ENCODE measurements at regions of chr17 and their contacts with region 1.

Region 1: DNA sequence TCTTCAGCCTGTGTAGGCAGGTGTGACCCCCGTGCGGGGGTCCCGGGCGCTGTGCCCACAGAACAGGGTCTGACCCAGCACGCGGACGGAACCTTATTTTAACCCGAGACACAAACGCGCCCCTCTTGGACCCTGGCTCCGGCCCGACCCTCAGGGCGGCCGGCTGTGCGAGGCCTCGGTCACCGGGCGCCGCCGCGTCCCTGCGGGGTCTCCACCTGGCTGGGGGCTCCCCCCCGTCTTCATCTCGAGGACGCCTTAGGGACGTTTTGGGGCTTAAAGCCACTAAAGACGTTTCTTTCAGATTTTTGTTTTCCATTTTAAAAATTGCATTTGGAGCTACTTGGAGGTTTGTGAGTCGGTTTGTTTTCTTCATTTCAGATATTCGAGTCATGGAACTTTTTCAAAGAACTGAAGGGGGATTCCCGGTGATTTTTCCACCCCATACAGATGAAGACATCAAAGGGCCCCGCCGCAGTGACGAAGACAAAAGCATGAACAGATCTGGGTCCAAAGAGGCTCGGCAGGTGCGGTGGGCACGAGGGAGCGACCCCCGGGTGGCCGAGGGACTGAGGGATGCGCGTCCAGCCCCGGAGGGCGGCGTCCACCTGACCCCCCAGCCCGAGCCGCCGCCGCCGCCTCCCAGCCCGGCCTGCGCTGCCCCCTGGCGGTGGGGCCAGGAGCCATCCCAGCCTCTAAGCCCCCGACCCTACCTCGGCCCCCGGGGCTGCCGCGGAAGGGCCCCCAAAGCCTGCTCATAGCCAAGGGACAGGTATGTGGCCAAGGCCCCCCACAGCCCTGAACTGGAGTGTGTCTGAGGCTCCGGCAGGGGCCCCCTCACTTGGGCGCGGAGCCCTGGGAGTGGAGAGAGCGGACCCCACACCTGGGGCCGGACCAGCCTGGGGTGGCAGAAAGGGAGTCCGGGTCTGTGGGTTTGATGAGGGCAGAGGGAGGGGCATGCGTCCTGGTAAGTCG is 3.8 kb upstream of the CD7 start:
- DNase-seq: peak; percentile 71
- H3K4me3 Mint-ChIP-seq: peak overlapping the region; percentile 94
- H3K27ac Mint-ChIP-seq: peak overlapping the region; percentile 99
- H3K4me1 Mint-ChIP-seq: peaks cover 18% of the 10 kb centered on the region
- H3K27me3 Mint-ChIP-seq: no peaks in the 10 kb centered on the region

Region 2: GRCh38 chr17:82092094-82092994 is 228.9 kb before region 1 on chr17:
- intact Hi-C with region 1: no loop called
- DNase-seq: no peak
- H3K4me3 Mint-ChIP-seq: no peak overlapping the region
- H3K27ac Mint-ChIP-seq: no peak overlapping the region
- H3K4me1 Mint-ChIP-seq: no peaks in the 10 kb centered on the region
- H3K27me3 Mint-ChIP-seq: no peaks in the 10 kb centered on the region

Region 3: DNA sequence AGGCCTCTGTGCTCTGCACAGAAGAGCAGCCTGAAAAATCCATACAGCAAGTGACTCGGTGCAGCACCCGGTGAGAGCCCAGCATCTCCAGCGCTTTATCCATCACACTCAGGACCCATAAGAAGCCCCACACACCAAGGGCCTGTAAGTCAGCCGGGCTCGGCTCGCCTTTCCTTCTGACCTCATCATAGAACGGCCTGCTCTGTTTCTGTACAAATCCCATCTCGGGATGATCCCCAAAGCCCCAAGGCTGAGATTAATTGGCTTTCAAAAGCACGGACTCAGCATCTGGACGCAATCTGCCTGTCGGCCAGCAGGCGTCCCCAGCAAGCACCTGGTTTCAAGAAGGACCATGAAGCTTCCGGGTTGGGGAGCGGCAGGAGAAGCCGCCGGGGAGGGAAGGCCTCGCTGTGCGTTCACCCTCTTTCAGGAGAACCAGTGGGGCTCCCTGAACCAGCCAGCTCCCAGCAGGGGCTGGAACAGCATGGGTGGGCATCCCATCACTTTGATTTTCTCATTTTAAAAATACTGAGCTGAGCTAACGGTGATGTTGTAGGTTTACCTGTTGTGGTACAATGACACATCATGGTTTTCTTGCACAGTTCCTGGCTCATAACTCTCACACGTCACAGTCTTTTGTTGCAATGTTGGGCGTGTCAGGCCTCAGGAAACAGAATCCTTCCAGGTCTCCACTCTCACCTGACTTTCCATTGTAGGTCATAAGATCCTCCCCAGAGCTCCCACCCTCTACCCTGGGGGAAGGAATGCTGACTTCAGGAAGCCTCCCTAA is 115.3 kb before region 1 on chr17:
- intact Hi-C with region 1: loop called (anchors 1 kb)
- DNase-seq: peak; percentile 73
- H3K4me3 Mint-ChIP-seq: peak overlapping the region; percentile 63
- H3K27ac Mint-ChIP-seq: peak overlapping the region; percentile 94
- H3K4me1 Mint-ChIP-seq: peaks cover 53% of the 10 kb centered on the region
- H3K27me3 Mint-ChIP-seq: no peaks in the 10 kb centered on the region

Region 4: DNA sequence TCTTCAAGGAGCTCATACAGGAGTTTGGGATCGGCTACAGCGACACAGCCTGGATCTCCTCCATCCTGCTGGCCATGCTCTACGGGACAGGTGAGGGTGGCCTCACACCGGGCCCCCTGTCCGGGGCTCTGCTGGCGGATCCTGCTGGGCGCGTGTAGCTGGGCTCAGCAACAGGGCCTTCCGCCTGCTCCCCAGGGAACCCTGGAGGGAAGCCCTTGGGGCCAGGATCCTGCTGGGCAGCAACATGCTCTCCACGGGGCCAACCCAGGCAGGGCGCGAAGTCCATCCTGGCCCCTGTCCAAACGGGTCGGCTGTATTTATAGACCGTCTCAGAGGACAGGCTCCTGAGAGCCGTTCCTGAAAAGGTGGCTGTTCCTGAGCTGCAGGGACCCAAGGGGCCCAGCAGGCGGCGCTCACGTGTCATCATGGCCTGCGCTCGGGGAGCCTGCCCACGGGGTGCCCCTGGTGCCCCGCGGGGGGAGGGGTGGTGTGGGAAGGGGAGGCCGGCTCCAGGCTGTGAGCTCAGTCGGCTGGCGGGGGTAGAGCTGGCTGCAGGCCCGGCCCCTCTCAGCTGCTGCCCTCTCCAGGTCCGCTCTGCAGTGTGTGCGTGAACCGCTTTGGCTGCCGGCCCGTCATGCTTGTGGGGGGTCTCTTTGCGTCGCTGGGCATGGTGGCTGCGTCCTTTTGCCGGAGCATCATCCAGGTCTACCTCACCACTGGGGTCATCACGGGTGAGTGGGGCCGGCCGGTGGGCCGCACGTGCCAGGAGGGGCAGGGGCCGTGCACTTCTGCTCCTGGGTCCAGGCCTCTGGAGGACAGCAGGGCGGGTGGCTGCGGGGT is 84.9 kb before region 1 on chr17:
- intact Hi-C with region 1: loop called (anchors 1 kb)
- DNase-seq: peak; percentile 60
- H3K4me3 Mint-ChIP-seq: no peak overlapping the region
- H3K27ac Mint-ChIP-seq: no peak overlapping the region
- H3K4me1 Mint-ChIP-seq: peaks cover 30% of the 10 kb centered on the region
- H3K27me3 Mint-ChIP-seq: no peaks in the 10 kb centered on the region

Region 5: GRCh38 chr17:82305727-82306300 is 15.4 kb before region 1 on chr17:
- intact Hi-C with region 1: loop called (anchors 1 kb)
- DNase-seq: no peak
- H3K4me3 Mint-ChIP-seq: no peak overlapping the region
- H3K27ac Mint-ChIP-seq: peak overlapping the region; percentile 83
- H3K4me1 Mint-ChIP-seq: peaks cover 45% of the 10 kb centered on the region
- H3K27me3 Mint-ChIP-seq: no peaks in the 10 kb centered on the region

Region 6: DNA sequence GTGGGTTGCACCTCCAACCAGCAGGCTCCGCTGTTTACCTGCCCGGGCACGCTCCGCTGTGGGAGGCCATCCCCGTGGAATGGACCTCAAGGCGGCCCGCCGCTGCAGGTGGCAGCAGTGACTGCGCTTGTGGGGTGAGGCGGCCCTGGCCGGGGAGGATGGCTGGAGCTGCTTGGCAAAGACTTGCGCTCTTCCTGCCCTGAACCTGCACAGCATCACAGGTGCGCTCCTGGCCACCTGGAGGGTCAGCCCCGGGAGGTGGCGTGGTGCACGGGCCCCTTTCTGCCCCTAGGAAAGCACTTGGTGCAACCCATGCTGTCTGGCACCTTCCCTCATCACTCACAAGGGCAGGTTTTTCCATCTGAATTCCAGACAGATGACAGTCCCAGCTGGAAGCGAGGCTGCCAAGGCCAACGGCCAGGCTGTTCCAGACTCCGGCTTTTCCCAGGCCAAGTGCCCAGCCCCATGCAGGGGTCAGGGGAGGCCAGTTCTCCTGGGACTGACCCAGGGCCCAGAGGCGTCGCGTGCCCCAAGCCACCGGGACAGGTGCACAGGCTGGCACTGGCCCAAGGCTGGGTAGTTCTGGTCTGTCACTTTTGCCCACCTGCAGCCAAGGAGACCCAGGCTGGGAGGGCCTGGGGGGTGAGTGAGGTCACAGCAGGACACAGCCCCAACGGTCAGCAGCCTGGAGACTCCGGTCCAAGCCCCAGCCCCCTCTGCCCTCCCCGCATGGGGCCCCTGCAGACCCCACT is 63.7 kb after region 1 on chr17:
- intact Hi-C with region 1: no loop called
- DNase-seq: no peak
- H3K4me3 Mint-ChIP-seq: no peak overlapping the region
- H3K27ac Mint-ChIP-seq: no peak overlapping the region
- H3K4me1 Mint-ChIP-seq: peaks cover 4% of the 10 kb centered on the region
- H3K27me3 Mint-ChIP-seq: peaks cover 3% of the 10 kb centered on the region

Region 7: DNA sequence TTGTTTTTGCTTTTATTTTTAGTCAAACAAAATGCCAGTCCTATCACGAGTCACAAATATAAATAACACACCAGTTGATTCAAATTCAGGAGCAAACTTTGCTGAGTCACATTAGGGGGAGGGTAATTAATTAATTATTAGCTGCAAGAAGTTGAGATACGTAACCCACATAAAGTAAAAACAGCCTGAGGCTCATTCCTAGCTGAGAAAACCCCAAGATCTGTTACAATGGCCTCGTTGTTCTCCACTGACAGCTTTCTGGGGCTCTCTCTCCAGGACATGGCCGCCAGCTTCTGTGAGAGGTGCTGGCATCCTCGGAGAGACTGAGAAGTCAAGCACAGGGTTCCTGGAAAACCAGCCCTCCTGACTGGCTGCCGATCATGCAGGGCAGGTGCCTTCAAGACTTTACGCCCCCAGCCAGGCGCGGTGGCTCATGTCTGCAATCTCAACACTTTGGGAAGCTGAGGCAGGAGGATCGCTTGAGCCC is 366.2 kb after region 1 on chr17:
- intact Hi-C with region 1: no loop called
- DNase-seq: no peak
- H3K4me3 Mint-ChIP-seq: no peak overlapping the region
- H3K27ac Mint-ChIP-seq: no peak overlapping the region
- H3K4me1 Mint-ChIP-seq: peaks cover 7% of the 10 kb centered on the region
- H3K27me3 Mint-ChIP-seq: no peaks in the 10 kb centered on the region